Motor neuron (in vitro differentiated cells): ENCODE measurements at regions of chr12 and their contacts with region 1.

Region 1: DNA sequence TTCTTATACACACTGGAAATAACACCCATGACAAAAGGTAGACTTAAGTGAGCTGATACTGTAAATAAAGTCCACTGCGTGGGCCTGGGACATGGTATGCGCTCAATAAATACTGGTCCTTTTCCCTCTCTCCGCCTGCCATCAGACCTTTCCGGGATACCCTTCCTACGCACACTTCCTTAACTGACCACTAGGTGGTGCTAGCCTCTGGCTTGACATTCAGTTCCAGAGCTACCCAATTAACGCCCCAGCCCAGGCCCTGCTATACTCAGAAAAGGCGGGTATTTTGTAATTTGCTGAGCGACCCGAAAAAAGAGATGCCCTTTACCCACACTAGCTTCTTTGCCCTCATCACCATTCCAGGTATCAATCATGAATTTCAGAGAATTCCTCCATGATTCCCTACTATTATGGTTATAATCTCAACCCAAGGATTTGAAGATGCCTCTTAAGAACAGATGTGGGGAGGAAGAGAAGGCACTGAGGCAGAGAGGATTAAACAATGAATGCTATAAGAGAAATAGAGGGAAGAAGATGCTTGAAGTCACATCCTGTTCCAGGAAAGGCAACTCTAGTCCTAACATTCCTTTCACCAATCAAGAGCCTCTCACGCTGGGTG is 3.9 kb upstream of the LRP1 start:
- ATAC-seq: peak in 3 of 8 experiments; percentile 11 to 43 (median 12)
- H3K4me3 ChIP-seq: no peak overlapping the region
- H3K27ac ChIP-seq: no peak overlapping the region
- H3K4me1 ChIP-seq: peaks cover 5 to 6% of the 10 kb centered on the region in 2 donors

Region 2: GRCh38 chr12:57175428-57176138 is 51.2 kb after region 1 on chr12:
- in situ Hi-C with region 1: loop called in 3 of 9 experiments (anchors 10 kb)
- ATAC-seq: peak; percentile 51 to 93 (median 58)
- H3K4me3 ChIP-seq: no peak overlapping the region
- H3K27ac ChIP-seq: no peak overlapping the region
- H3K4me1 ChIP-seq: no peaks in the 10 kb centered on the region

Region 3: GRCh38 chr12:57182921-57183790 is 58.8 kb after region 1 on chr12:
- in situ Hi-C with region 1: loop called in 3 of 9 experiments (anchors 10 kb)
- ATAC-seq: peak; percentile 75 to 98 (median 82)
- H3K4me3 ChIP-seq: no peak overlapping the region
- H3K27ac ChIP-seq: no peak overlapping the region
- H3K4me1 ChIP-seq: no peaks in the 10 kb centered on the region